HEK293 (cell line): ENCODE measurements at regions of chr19 and their contacts with region 1.

Region 1: DNA sequence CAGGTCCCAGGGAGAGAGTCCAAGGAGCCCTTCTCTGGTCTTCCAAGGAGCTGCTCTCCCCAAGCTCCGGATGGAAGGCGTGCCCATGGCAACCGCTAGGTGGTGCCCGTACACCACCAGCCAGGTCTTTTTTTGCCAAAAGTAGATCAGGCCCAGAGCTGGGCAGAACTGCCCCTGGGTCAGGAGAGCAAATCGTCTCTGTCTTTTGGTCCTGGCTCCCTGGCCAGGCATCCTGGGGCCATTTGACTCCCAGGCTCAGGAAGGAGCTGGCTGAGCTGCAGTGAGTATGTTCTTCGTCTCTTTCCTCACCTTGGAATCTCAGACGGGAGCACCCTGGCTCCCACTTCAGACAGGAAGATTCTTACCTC is 24.6 kb upstream of the BCL3 start:
- H3K4me3 ChIP-seq: no peak overlapping the region
- H3K27ac ChIP-seq: no peak overlapping the region
- H3K4me1 ChIP-seq: peaks cover 3% of the 10 kb centered on the region; the same call in 1 of the 2 replicates
- CTCF ChIP-seq: peak; percentile 90

Region 2: GRCh38 chr19:44576843-44577565 is 146.9 kb before region 1 on chr19:
- CTCF ChIA-PET with region 1: interaction called, 23 read pairs
- POLR2A ChIA-PET with region 1: no interaction called
- H3K4me3 ChIP-seq: no peak overlapping the region
- H3K27ac ChIP-seq: no peak overlapping the region
- H3K4me1 ChIP-seq: no peaks in the 10 kb centered on the region
- CTCF ChIP-seq: peak; percentile 50

Region 3: GRCh38 chr19:44712864-44713515 is 10.9 kb before region 1 on chr19:
- CTCF ChIA-PET with region 1: interaction called, 66 read pairs
- POLR2A ChIA-PET with region 1: interaction called, 6 read pairs
- H3K4me3 ChIP-seq: no peak overlapping the region
- H3K27ac ChIP-seq: no peak overlapping the region
- H3K4me1 ChIP-seq: no peaks in the 10 kb centered on the region
- CTCF ChIP-seq: no peak

Region 4: DNA sequence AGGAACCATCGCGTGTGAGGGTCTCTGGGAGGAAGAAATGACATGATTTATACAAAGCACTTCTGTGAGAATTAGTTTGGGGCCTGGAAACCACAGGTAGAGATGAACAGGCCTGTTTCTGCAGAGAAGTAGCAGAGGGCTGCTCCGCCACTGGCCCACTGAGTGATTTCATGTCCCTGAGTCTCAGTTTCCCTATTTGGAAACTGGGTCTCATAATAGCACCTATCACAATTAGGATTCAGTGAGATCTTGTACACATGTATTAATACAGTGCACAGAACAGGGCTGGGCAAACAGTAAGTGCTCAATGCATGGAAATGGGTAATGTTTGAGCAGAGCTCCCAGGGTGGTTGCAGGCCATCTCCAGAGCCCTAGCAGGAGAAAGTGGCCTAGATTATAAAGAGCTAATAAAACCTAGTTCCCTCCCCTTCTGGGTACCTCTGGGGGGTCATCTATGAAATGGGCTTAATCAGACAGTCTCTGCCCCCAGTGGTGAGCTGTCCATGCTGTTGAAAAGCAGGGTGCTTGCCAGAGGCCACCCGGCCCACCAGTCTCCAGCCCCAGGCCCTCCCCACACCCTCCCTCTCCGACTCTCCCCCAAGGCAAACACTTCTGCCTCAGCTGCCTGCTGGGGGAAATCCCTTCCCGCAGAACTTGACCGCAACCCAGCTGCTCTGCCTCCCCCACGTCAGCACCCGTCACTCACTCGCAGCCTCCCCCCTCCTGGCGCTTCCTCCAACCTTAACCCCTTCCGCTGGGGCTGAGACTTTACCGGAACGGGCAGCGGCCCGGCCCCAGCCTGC is 29.1 kb after region 1 on chr19:
- CTCF ChIA-PET with region 1: interaction called, 26 read pairs
- POLR2A ChIA-PET with region 1: interaction called, 9 read pairs
- H3K4me3 ChIP-seq: peak overlapping the region; percentile 16; the same call in 1 of the 2 replicates
- H3K27ac ChIP-seq: no peak overlapping the region
- H3K4me1 ChIP-seq: peaks cover 19% of the 10 kb centered on the region
- CTCF ChIP-seq: 0 out of 2 replicates have a peak, but pooled peaks have one; percentile 17

Region 5: DNA sequence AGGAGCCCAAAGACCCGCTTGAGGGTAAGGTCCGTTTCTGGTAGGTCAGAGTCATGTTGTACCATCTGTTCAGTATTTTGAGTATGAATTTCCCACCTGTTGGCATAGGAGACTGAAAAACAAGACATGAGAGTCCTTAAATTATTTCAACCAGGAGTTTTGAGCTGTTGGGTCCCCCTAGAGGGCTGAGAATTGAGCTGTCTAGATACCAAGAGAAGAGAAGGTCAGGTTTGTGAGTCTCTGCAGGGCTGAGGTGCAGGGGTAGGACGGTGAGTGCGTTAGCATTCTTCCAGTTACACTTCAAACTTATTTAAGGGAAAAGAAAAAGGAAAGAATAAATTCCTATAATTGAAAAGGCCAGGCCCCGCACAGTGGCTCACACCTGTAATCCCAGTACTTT is 58.8 kb after region 1 on chr19:
- CTCF ChIA-PET with region 1: interaction called, 72 read pairs
- POLR2A ChIA-PET with region 1: no interaction called
- H3K4me3 ChIP-seq: no peak overlapping the region
- H3K27ac ChIP-seq: no peak overlapping the region
- H3K4me1 ChIP-seq: no peaks in the 10 kb centered on the region
- CTCF ChIP-seq: no peak

Region 6: GRCh38 chr19:44903602-44904425 is 179.9 kb after region 1 on chr19:
- CTCF ChIA-PET with region 1: interaction called, 11 read pairs
- POLR2A ChIA-PET with region 1: no interaction called
- H3K4me3 ChIP-seq: no peak overlapping the region
- H3K27ac ChIP-seq: no peak overlapping the region
- H3K4me1 ChIP-seq: peaks cover 6% of the 10 kb centered on the region; the same call in 1 of the 2 replicates
- CTCF ChIP-seq: peak; percentile 88